ENCODE measurements at regions of chr2 and their contacts with region 1.

Region 1: GRCh38 chr2:70616168-70616694 is 62.6 kb upstream of the TGFA start:
- DNase-seq: no peak
- ATAC-seq: no peak
- H3K4me3 ChIP-seq: no peak overlapping the region
- H3K27ac ChIP-seq: no peak overlapping the region
- H3K4me1 ChIP-seq: no peaks in the 10 kb centered on the region
- H3K27me3 ChIP-seq: no peaks in the 10 kb centered on the region

Region 2: GRCh38 chr2:70301344-70302194 is 314.7 kb before region 1 on chr2 and contains the start of gene FAM136A:
- intact Hi-C with region 1: loop called (anchors 1 to 5 kb)
- DNase-seq: peak; percentile 92 to 97
- ATAC-seq: peak; percentile 98
- H3K4me3 ChIP-seq: peak within 1 kb of the TSS; percentile 68 to 70
- H3K27ac ChIP-seq: peak within 1 kb of the TSS in 1 of 2 donors; percentile 1
- H3K4me1 ChIP-seq: no peaks in the 10 kb centered on the region
- H3K27me3 ChIP-seq: no peaks in the 10 kb centered on the region
- total RNA-seq, gene FAM136A: 15.7 to 19.8 TPM

Region 3: GRCh38 chr2:70340921-70341765 is 275.1 kb before region 1 on chr2:
- intact Hi-C with region 1: loop called (anchors 1 to 10 kb)
- DNase-seq: no peak
- ATAC-seq: peak; percentile 56
- H3K4me3 ChIP-seq: no peak overlapping the region
- H3K27ac ChIP-seq: no peak overlapping the region
- H3K4me1 ChIP-seq: no peaks in the 10 kb centered on the region
- H3K27me3 ChIP-seq: no peaks in the 10 kb centered on the region

Region 4: GRCh38 chr2:70703900-70704549 is 87.8 kb after region 1 on chr2:
- intact Hi-C with region 1: no loop called
- DNase-seq: no peak
- ATAC-seq: no peak
- H3K4me3 ChIP-seq: no peak overlapping the region
- H3K27ac ChIP-seq: no peak overlapping the region
- H3K4me1 ChIP-seq: no peaks in the 10 kb centered on the region
- H3K27me3 ChIP-seq: no peaks in the 10 kb centered on the region

Region 5: GRCh38 chr2:71049365-71050360 is 433.4 kb after region 1 on chr2:
- intact Hi-C with region 1: no loop called
- DNase-seq: no peak
- ATAC-seq: no peak
- H3K4me3 ChIP-seq: no peak overlapping the region
- H3K27ac ChIP-seq: no peak overlapping the region
- H3K4me1 ChIP-seq: no peaks in the 10 kb centered on the region
- H3K27me3 ChIP-seq: no peaks in the 10 kb centered on the region

Measured in aorta (tissue), 5 donors.